ENCODE measurements at regions of chr5 and their contacts with region 1.

Region 1: DNA sequence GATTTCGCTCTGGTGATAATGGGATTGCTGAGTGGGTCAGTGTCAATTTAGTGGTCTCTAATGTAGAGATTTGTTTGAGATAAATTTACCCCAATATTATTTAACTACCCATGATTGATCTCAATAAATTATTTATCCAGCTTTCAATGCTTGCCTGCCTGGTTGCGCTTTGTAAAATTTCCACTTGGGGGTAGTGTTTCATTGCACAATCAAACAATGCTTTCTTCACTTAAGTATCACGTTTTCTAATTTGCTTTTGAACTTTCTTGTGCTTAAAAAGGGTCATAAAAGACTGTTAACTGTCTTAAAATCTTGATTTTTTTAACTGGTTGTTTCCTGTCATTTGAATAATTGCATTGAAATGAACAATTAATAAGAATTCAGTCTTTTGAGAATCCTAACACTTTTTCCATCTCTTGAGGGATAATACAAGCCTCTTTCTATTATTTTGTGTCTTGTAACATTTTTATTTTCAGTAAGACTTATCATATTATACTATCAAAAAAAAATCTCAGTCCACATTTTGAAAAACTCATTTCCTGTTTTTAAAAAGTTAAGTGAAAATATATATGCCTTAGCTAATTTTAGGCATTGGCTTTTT is 18.7 kb downstream of the HSD17B4 start:
- DNase-seq: no peak
- ATAC-seq: no peak
- H3K4me3 Mint-ChIP-seq: no peak overlapping the region
- H3K27ac Mint-ChIP-seq: peak overlapping the region; percentile 76
- H3K4me1 Mint-ChIP-seq: peaks cover 32% of the 10 kb centered on the region
- H3K27me3 Mint-ChIP-seq: no peaks in the 10 kb centered on the region
- CTCF ChIP-seq: no peak

Region 2: DNA sequence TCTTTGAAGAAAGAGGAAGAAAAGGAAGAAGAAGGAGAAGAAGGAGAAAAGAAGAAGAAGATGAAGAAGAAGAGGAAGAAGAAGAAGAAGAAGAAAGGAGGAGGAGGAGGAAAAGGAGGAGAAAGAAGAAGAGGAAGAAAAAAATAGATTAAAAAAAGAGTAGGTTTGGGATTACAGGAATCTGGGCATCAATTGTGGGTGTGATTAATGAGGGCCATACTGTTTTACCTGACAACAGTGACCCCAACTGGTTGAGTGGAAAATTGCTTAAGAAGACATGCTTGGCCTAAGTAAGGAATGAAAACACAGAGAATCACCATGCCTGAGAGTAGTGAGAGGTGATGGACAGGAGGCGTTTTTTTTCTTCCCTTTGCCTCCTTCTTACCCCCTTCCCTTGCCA is 273.0 kb after region 1 on chr5:
- CTCF ChIA-PET with region 1: interaction called, 5 read pairs
- POLR2A ChIA-PET with region 1: no interaction called
- intact Hi-C with region 1: loop called (anchors 1 kb)
- DNase-seq: no peak
- ATAC-seq: peak; percentile 42
- H3K4me3 Mint-ChIP-seq: no peak overlapping the region
- H3K27ac Mint-ChIP-seq: no peak overlapping the region
- H3K4me1 Mint-ChIP-seq: no peaks in the 10 kb centered on the region
- H3K27me3 Mint-ChIP-seq: no peaks in the 10 kb centered on the region
- CTCF ChIP-seq: no peak

Region 3: GRCh38 chr5:120457839-120458507 is 987.0 kb after region 1 on chr5:
- CTCF ChIA-PET with region 1: no interaction called
- POLR2A ChIA-PET with region 1: interaction called, 3 read pairs
- intact Hi-C with region 1: loop called (anchors 1 kb)
- DNase-seq: peak; percentile 61
- ATAC-seq: peak; percentile 85
- H3K4me3 Mint-ChIP-seq: peak overlapping the region; percentile 85
- H3K27ac Mint-ChIP-seq: peak overlapping the region; percentile 84
- H3K4me1 Mint-ChIP-seq: peaks cover 13% of the 10 kb centered on the region
- H3K27me3 Mint-ChIP-seq: peaks cover 5% of the 10 kb centered on the region
- CTCF ChIP-seq: no peak

Region 4: GRCh38 chr5:120532835-120533234 is 1061.9 kb after region 1 on chr5:
- CTCF ChIA-PET with region 1: no interaction called
- POLR2A ChIA-PET with region 1: no interaction called
- intact Hi-C with region 1: loop called (anchors 5 kb)
- DNase-seq: no peak
- ATAC-seq: no peak
- H3K4me3 Mint-ChIP-seq: no peak overlapping the region
- H3K27ac Mint-ChIP-seq: no peak overlapping the region
- H3K4me1 Mint-ChIP-seq: no peaks in the 10 kb centered on the region
- H3K27me3 Mint-ChIP-seq: no peaks in the 10 kb centered on the region
- CTCF ChIP-seq: no peak

Measured in activated B cell treated with CpG ODN at 0.5 μM for 24 hours (primary cell).